Common myeloid progenitor, CD34-positive (primary cell): ENCODE measurements at regions of chr1 and their contacts with region 1.

Region 1: GRCh38 chr1:202728951-202729350 is 18.7 kb upstream of the SYT2 start:
- DNase-seq: no peak
- H3K4me3 ChIP-seq: no peak overlapping the region
- H3K27ac ChIP-seq: no peak overlapping the region
- H3K4me1 ChIP-seq: no peaks in the 10 kb centered on the region
- H3K27me3 ChIP-seq: no peaks in the 10 kb centered on the region

Region 2: GRCh38 chr1:202716654-202717053 is 12.3 kb before region 1 on chr1:
- CTCF ChIA-PET with region 1: interaction called, 29 read pairs
- POLR2A ChIA-PET with region 1: no interaction called
- DNase-seq: no peak
- H3K4me3 ChIP-seq: no peak overlapping the region
- H3K27ac ChIP-seq: no peak overlapping the region
- H3K4me1 ChIP-seq: no peaks in the 10 kb centered on the region
- H3K27me3 ChIP-seq: peaks cover 5 to 31% (median 26%) of the 10 kb centered on the region in 5 experiments

Region 3: DNA sequence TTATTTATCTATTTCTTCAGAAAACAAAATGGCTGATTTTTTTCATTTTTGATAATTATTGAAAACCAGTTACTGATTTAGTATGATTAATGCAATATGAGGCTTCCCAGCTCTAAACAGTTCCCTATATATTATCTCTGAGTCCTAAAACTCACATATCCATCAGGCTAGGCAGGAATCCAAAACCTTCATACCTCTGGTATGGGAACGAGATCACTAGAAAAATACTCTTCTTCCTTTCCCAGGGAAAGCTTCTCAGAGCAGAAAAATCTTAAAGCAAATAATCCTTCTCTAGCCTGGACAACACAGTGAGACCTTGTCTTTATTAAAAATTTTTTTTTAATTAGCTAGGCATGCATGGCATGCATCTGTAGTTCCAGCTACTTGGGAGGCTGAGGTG is 36.8 kb after region 1 on chr1:
- CTCF ChIA-PET with region 1: no interaction called
- POLR2A ChIA-PET with region 1: no interaction called
- DNase-seq: no peak
- H3K4me3 ChIP-seq: no peak overlapping the region
- H3K27ac ChIP-seq: no peak overlapping the region
- H3K4me1 ChIP-seq: no peaks in the 10 kb centered on the region
- H3K27me3 ChIP-seq: no peaks in the 10 kb centered on the region